Dorsolateral prefrontal cortex (tissue), 120 donors: ENCODE measurements at regions of chr18 and their contacts with region 1.

Region 1: GRCh38 chr18:35949903-35950627 is 22.4 kb upstream of the RMP24 start:
- DNase-seq: peak in 9 of 10 donors; percentile 30 to 70 (median 55)
- H3K4me3 ChIP-seq: peak overlapping the region; percentile 41 to 88 (median 67)
- H3K27ac ChIP-seq: no peak overlapping the region
- H3K27me3 ChIP-seq: peaks cover 0 to 5% (median 0%) of the 10 kb centered on the region in 45 donors
- CTCF ChIP-seq: peak; percentile 91 to 99 (median 96)

Region 2: GRCh38 chr18:35386600-35387351 is 563.3 kb before region 1 on chr18:
- intact Hi-C with region 1: loop called in 1 of 2 experiments (anchors 10 kb)
- DNase-seq: peak in 8 of 10 donors; percentile 25 to 70 (median 54)
- H3K4me3 ChIP-seq: peak overlapping the region in 16 of 59 donors; percentile 1 to 45 (median 16)
- H3K27ac ChIP-seq: peak overlapping the region in 7 of 59 donors; percentile 17 to 56 (median 33)
- H3K27me3 ChIP-seq: no peaks in the 10 kb centered on the region
- CTCF ChIP-seq: peak; percentile 76 to 96 (median 88)

Region 3: GRCh38 chr18:35661483-35662146 is 288.4 kb before region 1 on chr18:
- intact Hi-C with region 1: loop called in 1 of 2 experiments (anchors 5 kb)
- DNase-seq: no peak
- H3K4me3 ChIP-seq: no peak overlapping the region
- H3K27ac ChIP-seq: no peak overlapping the region
- H3K27me3 ChIP-seq: no peaks in the 10 kb centered on the region
- CTCF ChIP-seq: peak in 51 of 56 donors; percentile 14 to 72 (median 48)